Activated B cell treated with CpG ODN at 0.5 μM for 24 hours (primary cell): ENCODE measurements at regions of chr2 and their contacts with region 1.

Region 1: GRCh38 chr2:46547223-46548102 is 68.1 kb downstream of the TMEM247 start:
- DNase-seq: no peak
- ATAC-seq: no peak
- H3K4me3 Mint-ChIP-seq: peak overlapping the region; percentile 78
- H3K27ac Mint-ChIP-seq: peak overlapping the region; percentile 91
- H3K4me1 Mint-ChIP-seq: peaks cover 88% of the 10 kb centered on the region
- H3K27me3 Mint-ChIP-seq: no peaks in the 10 kb centered on the region
- CTCF ChIP-seq: no peak

Region 2: DNA sequence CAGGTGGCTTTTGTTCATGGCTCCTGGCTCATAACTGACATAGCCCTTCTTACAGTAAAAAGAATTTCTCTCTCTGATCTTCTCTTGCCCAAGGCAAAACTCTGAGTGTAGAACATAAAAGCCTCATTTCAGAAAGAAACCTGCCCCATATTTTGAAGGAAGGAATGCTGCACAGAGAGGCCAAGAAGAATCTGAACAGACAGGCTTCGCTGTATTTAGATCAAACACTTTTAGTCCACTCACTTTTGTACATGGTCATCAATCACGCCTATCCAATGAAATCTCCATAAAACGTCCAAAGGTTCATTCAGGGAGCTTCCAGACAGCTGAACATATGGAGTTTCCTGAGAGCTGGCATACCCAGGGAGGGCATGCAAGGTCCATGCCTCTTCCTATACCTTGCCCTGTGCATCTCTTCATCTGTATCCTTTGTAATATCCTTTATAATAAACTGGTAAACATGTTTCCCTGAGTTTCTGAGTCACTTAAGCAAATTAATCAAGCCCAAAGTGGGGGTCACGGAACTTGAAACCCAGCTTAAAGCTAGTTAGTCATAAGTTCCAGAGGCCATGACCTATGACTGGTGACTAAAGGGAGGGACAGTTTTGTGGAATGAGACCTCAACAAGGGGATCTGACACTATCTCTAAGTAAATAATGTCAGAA is 130.6 kb before region 1 on chr2:
- CTCF ChIA-PET with region 1: no interaction called
- POLR2A ChIA-PET with region 1: no interaction called
- intact Hi-C with region 1: no loop called
- DNase-seq: no peak
- ATAC-seq: no peak
- H3K4me3 Mint-ChIP-seq: no peak overlapping the region
- H3K27ac Mint-ChIP-seq: no peak overlapping the region
- H3K4me1 Mint-ChIP-seq: no peaks in the 10 kb centered on the region
- H3K27me3 Mint-ChIP-seq: peaks cover 3% of the 10 kb centered on the region
- CTCF ChIP-seq: no peak

Region 3: GRCh38 chr2:46574457-46575355 is 27.2 kb after region 1 on chr2:
- CTCF ChIA-PET with region 1: interaction called, 13 read pairs
- POLR2A ChIA-PET with region 1: interaction called, 166 read pairs
- intact Hi-C with region 1: loop called (anchors 1 kb)
- DNase-seq: no peak
- ATAC-seq: peak; percentile 52
- H3K4me3 Mint-ChIP-seq: peak overlapping the region; percentile 76
- H3K27ac Mint-ChIP-seq: peak overlapping the region; percentile 95
- H3K4me1 Mint-ChIP-seq: peaks cover 79% of the 10 kb centered on the region
- H3K27me3 Mint-ChIP-seq: no peaks in the 10 kb centered on the region
- CTCF ChIP-seq: no peak

Region 4: DNA sequence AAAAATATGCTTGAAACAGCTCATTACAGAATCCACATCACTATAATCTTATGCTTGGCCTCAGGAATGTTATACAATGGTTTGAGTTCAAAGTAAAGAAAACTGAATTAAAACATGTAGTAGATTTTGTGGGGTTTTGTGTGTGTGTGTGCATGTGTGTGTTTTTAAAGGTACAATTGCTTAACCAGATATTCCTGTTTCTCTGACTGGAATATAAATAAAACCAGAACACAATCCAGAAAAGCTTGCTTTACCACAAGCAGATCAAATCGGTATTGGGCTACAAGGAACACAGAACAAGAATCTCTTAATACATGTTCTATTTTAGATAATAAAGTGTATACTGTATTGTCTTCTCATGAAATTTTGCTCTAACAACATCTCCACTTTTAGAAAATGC is 41.9 kb after region 1 on chr2:
- CTCF ChIA-PET with region 1: no interaction called
- POLR2A ChIA-PET with region 1: no interaction called
- intact Hi-C with region 1: no loop called
- DNase-seq: no peak
- ATAC-seq: no peak
- H3K4me3 Mint-ChIP-seq: no peak overlapping the region
- H3K27ac Mint-ChIP-seq: no peak overlapping the region
- H3K4me1 Mint-ChIP-seq: peaks cover 5% of the 10 kb centered on the region
- H3K27me3 Mint-ChIP-seq: no peaks in the 10 kb centered on the region
- CTCF ChIP-seq: no peak

Region 5: DNA sequence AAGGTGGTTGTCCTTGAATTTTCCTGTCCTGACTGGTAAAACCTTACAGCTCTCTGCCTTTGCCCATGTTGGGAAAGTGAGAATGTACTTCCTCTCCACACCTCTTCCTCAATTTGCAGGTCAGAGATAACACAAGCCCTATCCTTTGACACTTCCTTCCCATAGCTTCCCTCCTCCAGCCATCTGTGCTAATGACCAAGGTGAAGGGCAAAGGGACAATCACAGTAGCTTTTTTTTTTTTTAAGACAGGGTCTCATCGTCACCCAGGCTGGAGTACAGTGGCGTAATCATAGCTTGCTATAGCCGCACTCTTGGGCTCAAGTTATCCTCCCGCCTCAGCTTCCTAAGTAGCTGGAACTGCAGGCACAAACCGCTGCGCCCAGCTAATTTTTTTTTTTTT is 631.9 kb after region 1 on chr2:
- CTCF ChIA-PET with region 1: no interaction called
- POLR2A ChIA-PET with region 1: no interaction called
- intact Hi-C with region 1: no loop called
- DNase-seq: no peak
- ATAC-seq: no peak
- H3K4me3 Mint-ChIP-seq: no peak overlapping the region
- H3K27ac Mint-ChIP-seq: no peak overlapping the region
- H3K4me1 Mint-ChIP-seq: peaks cover 32% of the 10 kb centered on the region
- H3K27me3 Mint-ChIP-seq: no peaks in the 10 kb centered on the region
- CTCF ChIP-seq: no peak